Psoas muscle (tissue), 8 donors: ENCODE measurements at regions of chr19 and their contacts with region 1.

Region 1: GRCh38 chr19:40231544-40232424 is 5.3 kb upstream of the CCNP start:
- DNase-seq: no peak
- ATAC-seq: peak; percentile 43 to 64 (median 52)
- H3K4me3 ChIP-seq: no peak overlapping the region
- H3K27ac ChIP-seq: peak overlapping the region; percentile 9
- H3K4me1 ChIP-seq: peaks cover 21% of the 10 kb centered on the region
- H3K27me3 ChIP-seq: peaks cover 0 to 7% (median 0%) of the 10 kb centered on the region in 3 donors
- CTCF ChIP-seq: no peak

Region 2: DNA sequence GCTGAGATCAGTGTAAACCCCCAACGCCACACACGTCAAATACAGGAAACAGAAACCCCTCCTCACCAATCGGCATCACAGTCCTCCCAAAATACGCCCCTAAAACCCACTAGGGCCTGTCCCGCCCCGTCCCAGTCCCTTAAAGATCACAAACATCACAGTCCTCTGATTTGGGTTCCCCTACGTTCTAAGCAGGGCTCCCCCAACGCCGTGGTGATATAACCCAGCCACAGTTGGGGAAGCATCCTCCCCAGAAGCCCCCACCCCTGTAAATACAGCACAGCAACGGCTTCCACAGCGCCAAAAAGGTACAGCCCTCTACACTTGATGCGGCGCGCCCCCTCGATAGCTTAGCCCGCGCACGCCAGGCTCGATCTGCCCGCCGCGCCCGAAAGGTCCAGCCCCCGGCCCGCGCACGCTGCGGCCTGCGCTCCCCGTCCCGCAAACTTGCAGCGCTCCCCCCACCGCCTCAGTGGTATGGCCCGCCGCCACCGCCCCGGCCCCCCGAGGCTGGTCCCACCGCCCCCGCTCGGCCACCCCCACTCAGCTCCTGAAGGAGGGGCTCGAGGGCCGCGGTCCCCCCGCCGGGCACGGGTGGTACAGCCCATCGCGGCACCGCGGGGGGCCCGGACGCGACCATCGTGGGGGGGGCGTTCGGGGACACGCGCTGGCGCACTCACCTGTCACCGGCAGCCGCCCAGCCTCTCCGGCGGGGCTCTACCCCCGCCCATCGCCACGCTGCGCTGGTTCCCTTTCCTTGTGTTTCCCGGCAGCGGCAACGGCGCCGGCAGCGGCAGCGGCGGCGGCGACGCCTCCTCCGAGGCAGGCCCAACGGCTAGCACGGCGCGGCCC is 52.9 kb after region 1 on chr19 and contains the start of gene AKT2:
- intact Hi-C with region 1: loop called in 1 of 2 experiments (anchors 5 kb)
- DNase-seq: peak in 1 of 2 donors; percentile 76
- ATAC-seq: peak; percentile 56 to 63 (median 58)
- H3K4me3 ChIP-seq: peak within 1 kb of the TSS; percentile 87
- H3K27ac ChIP-seq: peak within 1 kb of the TSS; percentile 87
- H3K4me1 ChIP-seq: peaks cover 45% of the 10 kb centered on the region
- H3K27me3 ChIP-seq: no peaks in the 10 kb centered on the region
- CTCF ChIP-seq: no peak
- total RNA-seq, gene AKT2: 135 to 194 (median 173) TPM